ENCODE measurements at regions of chr3 and their contacts with region 1.

Region 1: DNA sequence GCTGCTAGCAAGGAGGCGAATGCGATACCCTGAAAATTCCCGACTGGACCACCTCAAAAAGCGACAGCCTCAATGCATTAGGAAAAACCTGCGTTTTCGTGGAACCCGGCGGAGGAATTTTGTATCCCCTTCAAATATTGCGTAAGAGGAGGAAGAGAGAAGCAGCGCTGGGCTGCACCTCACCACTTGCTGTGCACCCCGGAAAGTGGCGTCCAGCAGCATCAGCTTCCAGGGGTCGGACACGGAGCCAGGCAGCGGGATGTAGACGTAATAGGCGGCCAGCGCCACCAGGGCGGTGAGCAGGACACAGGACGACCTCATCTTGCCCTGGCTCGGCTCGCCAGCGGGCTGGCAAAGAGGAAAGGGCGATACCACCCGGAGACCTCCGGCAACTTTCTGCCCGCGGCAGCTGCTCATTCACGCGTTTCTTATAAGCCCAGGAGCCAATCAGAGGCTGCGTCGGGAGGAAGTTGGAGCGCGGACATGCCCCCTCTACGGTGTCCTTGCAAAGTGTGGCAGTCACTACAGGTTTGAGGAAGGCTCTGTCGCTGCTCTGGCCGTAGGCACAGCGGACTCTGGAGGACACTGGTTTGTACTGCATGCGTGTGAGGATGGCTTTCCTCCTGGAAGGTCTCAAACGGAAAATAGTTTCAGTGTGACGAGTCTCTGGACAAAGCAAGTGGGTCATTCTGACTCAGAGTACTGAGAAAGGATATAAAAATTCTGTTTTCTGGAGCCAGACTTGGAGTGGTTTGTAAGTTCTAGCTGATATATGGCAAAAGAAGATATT is at the start of gene NCEH1:
- DNase-seq: peak; percentile 99
- ATAC-seq: peak; percentile 90
- H3K4me3 ChIP-seq: peak within 1 kb of the TSS; percentile 93
- H3K27ac ChIP-seq: peak within 1 kb of the TSS; percentile 91
- H3K4me1 ChIP-seq: peaks cover 33% of the 10 kb centered on the region
- H3K27me3 ChIP-seq: no peaks in the 10 kb centered on the region
- CTCF ChIP-seq: peak; percentile 88
- total RNA-seq, gene NCEH1: 28.2 and 33.9 TPM in 2 replicates

Region 2: GRCh38 chr3:171358181-171358880 is 1352.5 kb before region 1 on chr3:
- CTCF ChIA-PET with region 1: no interaction called
- POLR2A ChIA-PET with region 1: no interaction called
- intact Hi-C with region 1: no loop called
- DNase-seq: peak; percentile 65
- ATAC-seq: peak; percentile 8; the same call in 1 of the 2 replicates
- H3K4me3 ChIP-seq: no peak overlapping the region
- H3K27ac ChIP-seq: peak overlapping the region; percentile 88
- H3K4me1 ChIP-seq: peaks cover 53% of the 10 kb centered on the region
- H3K27me3 ChIP-seq: no peaks in the 10 kb centered on the region
- CTCF ChIP-seq: no peak

Region 3: DNA sequence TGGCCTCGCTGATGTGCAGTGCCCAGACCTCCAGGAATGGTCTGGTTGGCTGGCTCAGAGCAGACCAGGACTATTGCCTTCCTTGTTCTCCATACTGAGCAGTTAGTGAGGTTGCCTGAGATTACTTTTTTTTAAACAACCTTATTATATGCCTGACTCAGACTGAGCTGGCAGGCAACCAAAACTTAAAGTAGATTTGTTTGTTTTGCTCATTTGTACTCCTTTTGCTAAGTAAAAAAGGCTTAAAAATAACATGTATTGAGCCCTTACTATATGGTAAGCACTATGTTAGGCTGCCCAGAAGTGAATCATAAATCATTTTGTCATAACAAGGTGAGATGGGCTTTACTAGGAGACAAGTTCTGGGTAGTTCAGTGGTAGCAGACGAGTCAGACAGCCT is 355.0 kb before region 1 on chr3:
- CTCF ChIA-PET with region 1: no interaction called
- POLR2A ChIA-PET with region 1: no interaction called
- intact Hi-C with region 1: no loop called
- DNase-seq: peak; percentile 88
- ATAC-seq: peak; percentile 95
- H3K4me3 ChIP-seq: no peak overlapping the region
- H3K27ac ChIP-seq: peak overlapping the region; percentile 40
- H3K4me1 ChIP-seq: peaks cover 18% of the 10 kb centered on the region
- H3K27me3 ChIP-seq: no peaks in the 10 kb centered on the region
- CTCF ChIP-seq: no peak

Region 4: GRCh38 chr3:172622916-172623700 is 87.8 kb before region 1 on chr3:
- CTCF ChIA-PET with region 1: no interaction called
- POLR2A ChIA-PET with region 1: interaction called, 21 read pairs
- intact Hi-C with region 1: no loop called
- DNase-seq: peak; percentile 78
- ATAC-seq: peak; percentile 73
- H3K4me3 ChIP-seq: peak overlapping the region; percentile 70
- H3K27ac ChIP-seq: peak overlapping the region; percentile 83
- H3K4me1 ChIP-seq: peaks cover 32% of the 10 kb centered on the region
- H3K27me3 ChIP-seq: no peaks in the 10 kb centered on the region
- CTCF ChIP-seq: peak; percentile 76

Region 5: DNA sequence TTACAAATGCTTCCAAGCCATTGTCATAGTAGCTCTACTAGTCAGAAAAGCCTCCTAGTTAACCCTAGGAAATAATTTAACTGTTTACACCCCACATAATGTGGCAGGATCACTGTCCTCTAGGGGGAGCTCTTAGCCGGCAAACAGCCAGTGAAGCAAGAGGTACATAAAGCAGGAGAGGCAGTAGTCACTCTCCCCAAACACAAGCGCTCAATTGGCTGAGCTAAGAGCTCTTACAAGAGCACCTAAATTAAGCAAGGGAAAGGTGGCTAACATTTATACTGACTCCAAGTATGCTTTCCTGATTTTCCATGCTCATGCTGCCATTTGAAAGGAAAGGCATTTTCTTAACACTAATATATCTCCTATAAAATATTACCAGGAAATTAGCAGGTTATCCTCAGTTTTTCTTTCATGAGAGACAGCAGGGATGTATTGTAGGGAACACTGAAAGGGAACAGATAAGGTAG is 37.6 kb before region 1 on chr3:
- CTCF ChIA-PET with region 1: interaction called, 21 read pairs
- POLR2A ChIA-PET with region 1: interaction called, 4 read pairs
- intact Hi-C with region 1: loop called (anchors 1 kb)
- DNase-seq: peak; percentile 93
- ATAC-seq: peak; percentile 84
- H3K4me3 ChIP-seq: no peak overlapping the region
- H3K27ac ChIP-seq: peak overlapping the region; percentile 8
- H3K4me1 ChIP-seq: peaks cover 35% of the 10 kb centered on the region
- H3K27me3 ChIP-seq: no peaks in the 10 kb centered on the region
- CTCF ChIP-seq: peak; percentile 93

Region 6: DNA sequence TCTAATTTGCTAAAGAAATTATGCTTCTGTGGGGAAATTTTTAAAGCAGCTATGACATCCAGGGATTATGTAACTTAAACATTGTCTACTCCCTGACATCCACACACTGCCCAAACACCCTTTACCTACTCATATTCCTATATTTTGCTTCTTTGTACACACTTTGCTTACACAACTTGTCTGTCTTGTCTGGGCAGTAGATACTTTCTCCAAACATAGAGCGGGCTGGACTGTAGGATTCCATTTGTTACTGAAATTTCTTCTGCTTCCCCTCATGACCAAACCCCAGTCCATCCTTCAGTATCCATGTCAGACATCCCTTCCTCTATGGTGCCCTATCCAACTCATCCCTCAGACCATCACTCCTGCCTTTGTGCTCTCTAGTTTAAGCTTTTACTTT is 19.9 kb before region 1 on chr3:
- CTCF ChIA-PET with region 1: no interaction called
- POLR2A ChIA-PET with region 1: interaction called, 3 read pairs
- intact Hi-C with region 1: loop called (anchors 1 kb)
- DNase-seq: peak; percentile 21
- ATAC-seq: peak; percentile 4; the same call in 1 of the 2 replicates
- H3K4me3 ChIP-seq: peak overlapping the region; percentile 14; the same call in 1 of the 2 replicates
- H3K27ac ChIP-seq: peak overlapping the region; percentile 12; the same call in 1 of the 2 replicates
- H3K4me1 ChIP-seq: peaks cover 28% of the 10 kb centered on the region
- H3K27me3 ChIP-seq: no peaks in the 10 kb centered on the region
- CTCF ChIP-seq: no peak

Region 7: DNA sequence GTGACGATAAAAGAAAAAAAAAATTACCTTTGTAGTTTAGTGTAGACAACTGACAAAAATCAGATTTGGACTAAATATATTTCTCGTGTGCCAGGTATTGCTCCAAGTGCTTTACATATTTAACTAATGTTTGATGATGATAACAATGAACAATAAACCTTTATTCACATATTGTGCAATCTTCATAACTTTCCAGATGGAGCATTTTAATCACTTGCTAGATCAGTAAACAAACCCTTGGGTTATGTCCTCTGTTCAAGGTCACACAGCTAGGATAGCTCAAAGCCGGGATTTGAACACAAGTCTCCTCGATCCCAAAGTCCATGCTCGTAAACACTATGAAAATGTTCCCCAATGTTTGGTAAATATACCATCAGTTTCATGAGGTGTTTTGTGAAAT is 14.5 kb before region 1 on chr3:
- CTCF ChIA-PET with region 1: no interaction called
- POLR2A ChIA-PET with region 1: interaction called, 6 read pairs
- intact Hi-C with region 1: loop called (anchors 1 kb)
- DNase-seq: no peak
- ATAC-seq: no peak
- H3K4me3 ChIP-seq: no peak overlapping the region
- H3K27ac ChIP-seq: no peak overlapping the region
- H3K4me1 ChIP-seq: peaks cover 9% of the 10 kb centered on the region
- H3K27me3 ChIP-seq: no peaks in the 10 kb centered on the region
- CTCF ChIP-seq: no peak